Activated B cell treated with CpG ODN at 0.5 μM for 24 hours (primary cell): ENCODE measurements at regions of chr5 and their contacts with region 1.

Region 1: DNA sequence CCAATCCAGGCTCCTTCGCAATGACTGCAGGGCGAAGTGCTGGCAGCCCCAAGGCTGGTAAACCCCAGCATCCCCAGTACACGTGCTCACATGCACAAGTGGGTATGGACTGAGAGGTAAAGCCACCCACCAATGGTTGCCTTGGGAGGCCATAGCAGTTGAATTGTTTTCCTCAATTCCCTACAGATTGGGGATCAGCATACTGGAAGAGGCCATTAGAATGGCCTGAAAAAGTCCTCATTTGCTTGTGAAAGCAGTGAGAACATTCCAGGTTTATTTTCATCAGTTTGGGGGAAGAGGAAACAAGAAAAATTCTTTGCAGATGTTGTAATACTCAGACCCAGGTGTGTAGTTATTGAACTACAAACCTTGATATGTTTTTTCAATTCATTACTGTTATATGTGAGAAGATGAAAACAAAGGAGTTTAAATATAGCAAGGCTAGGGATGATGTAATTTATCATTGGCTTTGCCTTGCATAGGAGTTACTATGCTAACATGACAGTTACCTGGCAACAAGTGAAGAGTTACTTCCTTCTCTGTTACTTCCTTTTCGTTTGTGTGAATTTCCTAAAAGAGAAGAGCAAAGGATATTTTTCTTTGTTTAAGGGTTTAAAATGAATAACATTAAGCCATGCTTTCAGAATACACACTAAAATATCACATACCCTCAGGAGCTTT is 36.4 kb downstream of the MTMR12 start:
- DNase-seq: no peak
- ATAC-seq: peak; percentile 76
- H3K4me3 Mint-ChIP-seq: peak overlapping the region; percentile 61
- H3K27ac Mint-ChIP-seq: peak overlapping the region; percentile 92
- H3K4me1 Mint-ChIP-seq: peaks cover 67% of the 10 kb centered on the region
- H3K27me3 Mint-ChIP-seq: no peaks in the 10 kb centered on the region
- CTCF ChIP-seq: no peak

Region 2: DNA sequence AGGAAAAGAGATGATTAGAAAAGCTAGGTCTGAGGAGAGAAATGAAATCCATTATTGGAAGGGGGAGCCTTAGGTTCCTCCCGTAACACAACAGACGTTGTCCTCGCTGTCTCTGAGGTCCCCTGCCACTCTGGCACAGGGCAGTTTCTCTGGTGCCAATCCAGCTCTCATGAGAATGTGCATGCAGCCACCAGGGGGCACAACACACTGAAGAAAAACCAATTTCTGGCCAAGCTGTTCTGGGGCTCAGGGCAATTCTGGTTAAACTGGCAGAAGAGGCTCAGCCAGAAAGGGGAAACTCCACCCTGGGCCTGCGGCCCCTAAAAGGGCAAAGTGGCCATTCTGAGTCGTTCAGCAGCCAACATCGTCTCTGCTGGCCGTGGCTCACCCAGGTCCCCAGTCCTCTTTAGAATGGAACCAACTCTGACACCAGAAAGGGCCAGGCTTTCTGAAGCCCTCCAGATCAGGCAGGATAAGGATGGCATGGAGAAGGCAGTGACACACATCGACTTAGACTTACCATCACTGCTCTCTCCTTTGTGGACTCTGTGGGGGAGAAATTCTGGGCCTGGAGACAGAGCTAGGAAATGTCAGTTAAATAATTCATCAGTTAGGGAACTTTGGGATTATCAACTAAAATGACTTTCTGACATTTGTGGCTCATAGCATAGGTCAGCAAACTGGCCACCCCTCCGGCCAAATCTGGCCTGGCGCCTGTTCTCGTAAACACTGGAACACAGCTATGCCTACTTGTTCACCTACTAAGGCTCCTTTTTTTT is 43.7 kb before region 1 on chr5:
- CTCF ChIA-PET with region 1: interaction called, 4 read pairs
- POLR2A ChIA-PET with region 1: no interaction called
- intact Hi-C with region 1: loop called (anchors 5 kb)
- DNase-seq: peak; percentile 62
- ATAC-seq: peak; percentile 87
- H3K4me3 Mint-ChIP-seq: no peak overlapping the region
- H3K27ac Mint-ChIP-seq: peak overlapping the region; percentile 10
- H3K4me1 Mint-ChIP-seq: peaks cover 21% of the 10 kb centered on the region
- H3K27me3 Mint-ChIP-seq: no peaks in the 10 kb centered on the region
- CTCF ChIP-seq: no peak

Region 3: DNA sequence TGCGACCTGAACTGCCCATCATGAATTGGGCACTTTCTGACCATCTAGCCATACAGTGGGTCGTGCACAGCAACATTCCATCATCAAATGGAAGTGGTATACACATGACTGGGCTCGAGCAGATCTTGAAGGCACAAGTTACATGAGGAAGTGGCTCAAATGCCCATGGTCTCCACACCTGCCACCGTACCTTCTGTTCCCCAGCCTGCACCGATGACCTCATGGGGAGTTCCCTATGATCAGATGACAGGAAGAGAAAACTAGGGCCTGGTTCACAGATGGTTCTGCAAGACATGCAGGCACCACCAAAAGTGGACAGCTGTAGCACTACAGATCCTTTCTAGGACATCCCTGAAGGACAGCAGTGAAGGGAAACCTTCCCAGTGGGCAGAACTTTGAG is 14.6 kb after region 1 on chr5:
- CTCF ChIA-PET with region 1: interaction called, 3 read pairs
- POLR2A ChIA-PET with region 1: interaction called, 3 read pairs
- intact Hi-C with region 1: loop called (anchors 1 kb)
- DNase-seq: peak; percentile 41
- ATAC-seq: peak; percentile 95
- H3K4me3 Mint-ChIP-seq: peak overlapping the region; percentile 68
- H3K27ac Mint-ChIP-seq: peak overlapping the region; percentile 85
- H3K4me1 Mint-ChIP-seq: peaks cover 63% of the 10 kb centered on the region
- H3K27me3 Mint-ChIP-seq: no peaks in the 10 kb centered on the region
- CTCF ChIP-seq: no peak